ENCODE measurements at regions of chr2 and their contacts with region 1.

Region 1: DNA sequence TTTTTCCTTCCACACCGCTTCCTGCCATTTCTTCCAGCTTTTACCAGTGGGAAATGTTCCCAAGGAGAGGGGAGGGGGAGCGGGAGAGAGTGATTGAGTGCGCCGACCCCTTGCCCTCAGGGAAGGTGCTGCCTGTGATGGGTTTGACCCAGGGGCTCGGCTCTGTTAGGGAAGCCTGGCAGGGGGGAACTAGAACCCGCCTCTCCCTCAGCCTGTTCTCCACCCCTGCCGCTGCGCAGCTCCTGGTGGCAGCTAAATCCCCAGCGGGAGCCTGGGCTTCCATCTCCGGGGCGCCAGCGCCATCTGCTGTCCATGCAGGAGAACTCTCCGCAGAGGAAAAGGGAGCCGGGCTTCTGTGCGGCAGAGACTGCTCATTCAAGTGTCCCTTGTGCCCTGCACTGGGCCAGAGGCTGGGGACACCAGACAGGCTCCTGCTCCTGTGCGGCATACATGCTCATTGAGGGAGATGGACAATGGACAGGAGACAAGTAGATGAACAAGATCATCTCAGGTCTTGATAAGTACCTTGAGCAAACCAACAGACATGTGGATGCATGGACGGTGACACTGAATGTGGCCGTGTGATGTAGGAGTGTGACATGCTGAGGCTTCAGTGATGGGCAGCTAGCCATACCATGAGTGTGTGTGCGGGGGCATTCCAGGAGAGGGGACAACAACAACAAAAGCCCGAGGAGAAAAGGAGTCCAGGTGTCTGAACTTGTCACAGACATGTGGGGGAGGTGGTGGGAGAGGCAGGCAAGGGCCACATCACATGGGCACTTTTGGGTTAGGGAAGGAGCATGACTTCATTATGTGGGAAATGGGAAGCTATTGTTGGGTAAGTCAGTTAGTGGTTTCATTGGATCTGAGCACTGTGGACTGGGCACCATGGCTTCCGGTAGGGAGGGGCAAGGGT is 13.3 kb downstream of the CHPF start:
- DNase-seq: peak; percentile 76
- H3K4me3 Mint-ChIP-seq: no peak overlapping the region
- H3K27ac Mint-ChIP-seq: no peak overlapping the region
- H3K4me1 Mint-ChIP-seq: no peaks in the 10 kb centered on the region
- H3K27me3 Mint-ChIP-seq: peaks cover 64% of the 10 kb centered on the region
- CTCF ChIP-seq: peak; percentile 97

Region 2: DNA sequence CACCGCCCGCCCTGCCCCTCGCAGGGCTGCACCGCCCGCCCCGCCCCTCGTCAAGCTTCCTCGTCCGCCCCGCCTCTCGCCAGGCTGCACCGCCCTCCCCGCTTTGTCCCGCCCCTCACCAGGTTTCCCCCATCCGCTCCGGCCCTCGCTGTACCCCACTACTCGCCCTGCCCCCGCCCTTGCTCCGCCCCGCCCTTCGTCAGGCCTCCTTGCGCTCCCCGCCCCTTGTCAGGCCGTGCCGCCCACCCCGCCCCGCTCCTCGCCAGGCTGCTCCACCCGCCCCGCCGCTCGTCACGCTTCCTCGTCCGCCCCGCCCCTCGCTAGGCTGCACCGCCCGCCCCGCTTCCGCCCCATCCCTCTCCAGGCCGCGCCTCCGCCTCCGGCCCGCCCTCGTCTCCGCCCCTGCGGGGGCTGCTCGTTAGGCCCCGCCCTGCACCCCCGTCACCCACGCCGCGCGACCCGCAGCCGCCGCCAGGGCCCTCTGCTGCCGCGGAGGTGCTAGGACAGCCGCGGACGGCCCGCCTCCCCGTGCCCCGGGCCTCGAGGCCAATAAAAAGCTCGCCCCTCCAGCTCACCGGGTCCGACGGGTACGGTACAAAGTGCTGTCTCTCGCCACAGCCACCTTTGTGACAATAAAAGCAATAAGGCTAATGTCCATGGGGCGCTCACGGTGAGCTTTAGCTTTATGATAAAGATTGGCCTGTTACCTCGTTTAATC is 142.0 kb before region 1 on chr2:
- CTCF ChIA-PET with region 1: interaction called, 17 read pairs
- POLR2A ChIA-PET with region 1: no interaction called
- intact Hi-C with region 1: no loop called
- DNase-seq: peak; percentile 87
- H3K4me3 Mint-ChIP-seq: peak overlapping the region; percentile 96
- H3K27ac Mint-ChIP-seq: peak overlapping the region; percentile 97
- H3K4me1 Mint-ChIP-seq: no peaks in the 10 kb centered on the region
- H3K27me3 Mint-ChIP-seq: no peaks in the 10 kb centered on the region
- CTCF ChIP-seq: no peak

Region 3: GRCh38 chr2:219430633-219431615 is 99.4 kb before region 1 on chr2:
- CTCF ChIA-PET with region 1: interaction called, 49 read pairs
- POLR2A ChIA-PET with region 1: interaction called, 3 read pairs
- intact Hi-C with region 1: no loop called
- DNase-seq: peak; percentile 60
- H3K4me3 Mint-ChIP-seq: no peak overlapping the region
- H3K27ac Mint-ChIP-seq: no peak overlapping the region
- H3K4me1 Mint-ChIP-seq: no peaks in the 10 kb centered on the region
- H3K27me3 Mint-ChIP-seq: peaks cover 5% of the 10 kb centered on the region
- CTCF ChIP-seq: peak; percentile 27

Region 4: GRCh38 chr2:219459460-219460311 is 70.6 kb before region 1 on chr2:
- CTCF ChIA-PET with region 1: interaction called, 33 read pairs
- POLR2A ChIA-PET with region 1: interaction called, 3 read pairs
- intact Hi-C with region 1: loop called (anchors 1 kb)
- DNase-seq: peak; percentile 55
- H3K4me3 Mint-ChIP-seq: no peak overlapping the region
- H3K27ac Mint-ChIP-seq: no peak overlapping the region
- H3K4me1 Mint-ChIP-seq: peaks cover 6% of the 10 kb centered on the region
- H3K27me3 Mint-ChIP-seq: no peaks in the 10 kb centered on the region
- CTCF ChIP-seq: peak; percentile 76

Region 5: DNA sequence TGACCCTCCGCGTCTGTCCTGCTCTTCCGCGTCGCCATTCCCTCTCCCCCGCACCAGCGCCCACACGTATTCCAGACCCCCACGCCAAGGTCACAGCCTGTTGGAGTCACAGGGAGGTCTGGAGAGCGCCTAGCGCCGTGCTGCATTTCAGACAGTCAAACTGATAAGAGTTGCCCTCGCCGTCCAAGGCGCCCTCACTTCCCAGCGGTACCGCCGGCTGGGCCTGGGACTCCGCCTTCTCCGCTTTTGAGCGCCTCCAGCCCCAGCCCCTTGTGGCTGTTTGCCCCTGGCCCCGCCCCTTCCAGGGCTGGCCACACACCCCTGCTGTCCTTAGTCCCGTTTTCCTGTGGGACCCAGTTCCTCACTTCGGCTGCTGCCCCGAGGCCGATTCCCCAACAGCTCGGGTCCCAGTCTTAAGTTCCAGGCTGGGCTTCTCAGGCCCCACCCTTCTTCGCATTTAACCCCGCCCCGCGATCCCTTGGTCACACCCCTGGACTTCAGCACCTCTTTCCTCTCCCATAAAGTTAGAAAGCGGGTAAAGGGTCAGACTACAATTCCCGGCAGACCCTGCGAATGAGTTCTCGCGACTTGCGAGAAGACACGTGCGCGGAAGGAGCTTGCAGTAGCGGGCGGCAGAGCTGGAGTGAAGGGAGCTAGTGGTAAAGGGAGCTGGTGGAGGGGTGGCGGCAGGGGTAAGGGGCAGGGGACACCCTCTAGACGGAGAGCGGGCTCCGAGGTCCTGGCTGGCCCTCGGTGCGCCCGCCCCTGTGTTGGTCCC is 31.8 kb before region 1 on chr2 and contains the start of gene GMPPA:
- CTCF ChIA-PET with region 1: interaction called, 22 read pairs
- POLR2A ChIA-PET with region 1: interaction called, 4 read pairs
- intact Hi-C with region 1: loop called (anchors 1 kb)
- DNase-seq: peak; percentile 99
- H3K4me3 Mint-ChIP-seq: peak within 1 kb of the TSS; percentile 92
- H3K27ac Mint-ChIP-seq: peak within 1 kb of the TSS; percentile 93
- H3K4me1 Mint-ChIP-seq: peaks cover 24% of the 10 kb centered on the region
- H3K27me3 Mint-ChIP-seq: no peaks in the 10 kb centered on the region
- CTCF ChIP-seq: no peak
- total RNA-seq, gene GMPPA: 70.7 and 80.2 TPM in 2 replicates

Region 6: DNA sequence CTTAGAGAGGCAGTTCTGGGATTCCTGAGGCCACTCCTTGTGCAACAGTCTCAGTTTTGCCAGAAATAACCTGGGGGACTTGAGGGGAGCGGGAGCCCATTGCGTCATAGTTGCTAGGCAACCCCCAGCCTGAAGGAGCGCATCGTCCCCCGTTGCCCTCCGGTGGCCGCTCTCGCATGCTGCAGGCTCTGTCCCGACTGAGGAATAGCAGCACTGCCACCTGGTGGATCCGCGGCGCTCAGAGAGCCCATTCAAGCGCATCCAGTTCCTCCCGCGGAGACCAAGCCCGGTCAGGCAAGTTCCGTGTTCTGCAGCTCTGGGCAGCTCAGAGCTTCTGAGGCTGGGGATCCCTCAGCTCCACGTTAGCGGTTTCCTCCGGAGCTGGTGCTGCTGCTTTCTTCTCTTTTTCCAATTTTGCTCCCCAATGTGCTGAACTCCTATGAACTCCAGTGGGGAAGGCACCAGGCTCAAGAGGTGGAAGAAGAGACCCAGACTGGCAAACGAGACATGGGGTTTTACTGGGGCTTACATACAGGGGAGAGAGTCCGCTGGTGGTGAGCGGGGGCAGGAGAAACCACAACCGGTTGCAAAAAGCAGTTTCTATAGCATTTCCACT is 112.3 kb after region 1 on chr2:
- CTCF ChIA-PET with region 1: interaction called, 17 read pairs
- POLR2A ChIA-PET with region 1: no interaction called
- intact Hi-C with region 1: no loop called
- DNase-seq: peak; percentile 95
- H3K4me3 Mint-ChIP-seq: no peak overlapping the region
- H3K27ac Mint-ChIP-seq: no peak overlapping the region
- H3K4me1 Mint-ChIP-seq: peaks cover 12% of the 10 kb centered on the region
- H3K27me3 Mint-ChIP-seq: no peaks in the 10 kb centered on the region
- CTCF ChIP-seq: peak; percentile 96

Region 7: DNA sequence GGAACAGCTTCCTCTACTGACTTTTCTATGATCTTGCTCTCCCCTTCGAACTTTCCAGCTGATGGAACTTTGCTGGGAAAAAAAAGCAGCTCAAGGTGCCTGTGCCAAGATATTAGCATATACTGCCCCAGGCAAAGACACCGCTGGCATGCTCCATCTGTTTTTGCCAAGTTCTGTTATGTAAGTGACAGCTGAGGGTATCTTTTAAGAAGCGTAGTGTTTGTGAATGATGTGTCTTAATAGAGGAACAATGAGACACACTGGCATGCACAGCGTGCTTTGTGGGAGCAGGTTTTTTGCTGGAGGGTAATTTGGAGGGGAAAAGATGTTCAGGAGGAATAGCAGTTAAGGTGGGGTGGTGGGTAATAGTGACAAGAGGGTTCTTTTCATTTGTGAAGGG is 144.9 kb after region 1 on chr2:
- CTCF ChIA-PET with region 1: no interaction called
- POLR2A ChIA-PET with region 1: no interaction called
- intact Hi-C with region 1: no loop called
- DNase-seq: peak; percentile 71
- H3K4me3 Mint-ChIP-seq: no peak overlapping the region
- H3K27ac Mint-ChIP-seq: no peak overlapping the region
- H3K4me1 Mint-ChIP-seq: peaks cover 8% of the 10 kb centered on the region
- H3K27me3 Mint-ChIP-seq: peaks cover 20% of the 10 kb centered on the region
- CTCF ChIP-seq: no peak

Region 8: GRCh38 chr2:219844401-219845091 is 314.2 kb after region 1 on chr2:
- CTCF ChIA-PET with region 1: no interaction called
- POLR2A ChIA-PET with region 1: no interaction called
- intact Hi-C with region 1: no loop called
- DNase-seq: no peak
- H3K4me3 Mint-ChIP-seq: no peak overlapping the region
- H3K27ac Mint-ChIP-seq: no peak overlapping the region
- H3K4me1 Mint-ChIP-seq: no peaks in the 10 kb centered on the region
- H3K27me3 Mint-ChIP-seq: no peaks in the 10 kb centered on the region
- CTCF ChIP-seq: no peak